ENCODE measurements at regions of chr16 and their contacts with region 1.

Region 1: DNA sequence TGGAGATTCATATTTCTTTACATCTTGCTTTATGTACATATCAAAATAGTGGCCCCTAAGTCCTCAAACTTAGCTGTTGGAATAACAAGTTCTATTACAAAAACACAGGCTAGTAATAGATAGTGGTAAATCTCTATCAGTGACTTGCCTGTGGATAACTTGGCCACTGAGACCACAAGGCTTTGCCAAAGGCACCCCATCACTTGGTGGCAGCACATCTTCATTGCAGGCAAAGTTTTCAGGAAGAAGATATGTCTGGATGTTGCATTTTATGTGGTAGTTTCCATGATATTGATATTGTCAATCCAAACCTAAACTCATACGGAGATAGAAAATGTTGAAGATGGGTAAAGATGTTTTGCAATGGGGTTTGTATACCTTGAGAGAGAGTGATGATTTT is 58.5 kb downstream of the KNOP1 start:
- DNase-seq: no peak
- ATAC-seq: no peak
- H3K4me3 ChIP-seq: no peak overlapping the region
- H3K4me3 Mint-ChIP-seq: no peak overlapping the region
- H3K27ac ChIP-seq: no peak overlapping the region
- H3K27ac Mint-ChIP-seq: no peak overlapping the region
- H3K4me1 ChIP-seq: no peaks in the 10 kb centered on the region
- H3K4me1 Mint-ChIP-seq: no peaks in the 10 kb centered on the region
- H3K27me3 ChIP-seq: no peaks in the 10 kb centered on the region
- H3K27me3 Mint-ChIP-seq: no peaks in the 10 kb centered on the region
- CTCF ChIP-seq: no peak

Region 2: DNA sequence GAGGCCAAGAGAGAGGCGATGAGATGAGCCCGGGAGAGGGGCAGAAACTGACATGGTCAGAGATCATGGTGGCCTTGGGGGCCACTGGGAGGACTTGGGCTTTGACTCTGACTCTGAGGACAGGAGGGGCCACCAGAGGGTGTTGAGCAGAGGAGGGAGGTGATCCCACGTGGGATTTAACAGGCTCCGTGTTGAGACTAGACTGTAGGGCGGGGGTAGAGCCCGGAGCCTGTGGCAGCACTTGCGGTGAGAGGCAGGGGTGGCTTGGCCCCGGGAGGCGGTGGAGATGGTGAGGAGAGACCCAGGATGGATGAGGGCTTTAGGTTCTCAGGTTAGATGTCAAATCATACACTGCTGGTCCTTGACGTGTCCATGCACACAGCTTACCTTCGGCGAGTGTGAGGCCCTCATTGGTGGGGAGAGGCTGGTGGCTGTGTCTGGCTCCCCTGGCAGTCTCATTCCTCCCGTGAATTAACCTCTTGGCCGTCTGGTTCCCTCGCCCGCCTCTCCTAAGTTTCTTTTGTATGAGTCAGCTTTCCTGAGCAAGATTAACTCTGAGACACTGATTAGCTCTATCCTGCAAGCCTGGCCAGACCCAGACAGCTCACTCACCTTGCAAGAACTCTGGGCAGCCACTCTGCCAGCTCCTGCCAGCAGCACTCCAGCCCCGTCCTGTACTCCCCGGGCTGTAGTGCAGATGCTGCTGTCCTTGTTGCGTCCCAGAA is 64.3 kb before region 1 on chr16:
- intact Hi-C with region 1: loop called (anchors 10 kb)
- DNase-seq: no peak
- ATAC-seq: no peak
- H3K4me3 ChIP-seq: no peak overlapping the region
- H3K4me3 Mint-ChIP-seq: no peak overlapping the region
- H3K27ac ChIP-seq: no peak overlapping the region
- H3K27ac Mint-ChIP-seq: no peak overlapping the region
- H3K4me1 ChIP-seq: no peaks in the 10 kb centered on the region
- H3K4me1 Mint-ChIP-seq: peaks cover 0 to 10% of the 10 kb centered on the region in 2 donors
- H3K27me3 ChIP-seq: no peaks in the 10 kb centered on the region
- H3K27me3 Mint-ChIP-seq: no peaks in the 10 kb centered on the region
- CTCF ChIP-seq: no peak

Region 3: GRCh38 chr16:20510323-20510722 is 850.8 kb after region 1 on chr16:
- intact Hi-C with region 1: no loop called
- DNase-seq: no peak
- ATAC-seq: no peak
- H3K4me3 ChIP-seq: no peak overlapping the region
- H3K4me3 Mint-ChIP-seq: no peak overlapping the region
- H3K27ac ChIP-seq: no peak overlapping the region
- H3K27ac Mint-ChIP-seq: no peak overlapping the region
- H3K4me1 ChIP-seq: no peaks in the 10 kb centered on the region
- H3K4me1 Mint-ChIP-seq: no peaks in the 10 kb centered on the region
- H3K27me3 ChIP-seq: no peaks in the 10 kb centered on the region
- H3K27me3 Mint-ChIP-seq: peaks cover 0 to 20% of the 10 kb centered on the region in 2 donors
- CTCF ChIP-seq: no peak

Region 4: GRCh38 chr16:21037736-21038135 is 1378.2 kb after region 1 on chr16:
- intact Hi-C with region 1: no loop called
- DNase-seq: no peak
- ATAC-seq: peak in 1 of 3 donors; percentile 10
- H3K4me3 ChIP-seq: no peak overlapping the region
- H3K4me3 Mint-ChIP-seq: no peak overlapping the region
- H3K27ac ChIP-seq: no peak overlapping the region
- H3K27ac Mint-ChIP-seq: no peak overlapping the region
- H3K4me1 ChIP-seq: no peaks in the 10 kb centered on the region
- H3K4me1 Mint-ChIP-seq: no peaks in the 10 kb centered on the region
- H3K27me3 ChIP-seq: no peaks in the 10 kb centered on the region
- H3K27me3 Mint-ChIP-seq: peaks cover 4 to 10% of the 10 kb centered on the region in 2 donors
- CTCF ChIP-seq: no peak

Measured in natural killer cell (primary cell).